Naive thymus-derived CD8-positive, alpha-beta T cell (primary cell): ENCODE measurements at regions of chr17 and their contacts with region 1.

Region 1: GRCh38 chr17:35578197-35578928 is at the start of gene PEX12:
- DNase-seq: peak; percentile 66 to 95 (median 88)
- ATAC-seq: peak; percentile 96 to 97
- H3K4me3 Mint-ChIP-seq: peak within 1 kb of the TSS; percentile 93 to 100 (median 98)
- H3K27ac Mint-ChIP-seq: peak within 1 kb of the TSS; percentile 98 to 100 (median 99)
- H3K4me1 Mint-ChIP-seq: peaks cover 10 to 30% (median 26%) of the 10 kb centered on the region in 4 donors
- H3K27me3 Mint-ChIP-seq: peaks cover 0 to under 1% (median 0%) of the 10 kb centered on the region in 5 donors
- polyA plus RNA-seq, gene PEX12: 1.7 to 2.5 (median 1.9) TPM

Region 2: DNA sequence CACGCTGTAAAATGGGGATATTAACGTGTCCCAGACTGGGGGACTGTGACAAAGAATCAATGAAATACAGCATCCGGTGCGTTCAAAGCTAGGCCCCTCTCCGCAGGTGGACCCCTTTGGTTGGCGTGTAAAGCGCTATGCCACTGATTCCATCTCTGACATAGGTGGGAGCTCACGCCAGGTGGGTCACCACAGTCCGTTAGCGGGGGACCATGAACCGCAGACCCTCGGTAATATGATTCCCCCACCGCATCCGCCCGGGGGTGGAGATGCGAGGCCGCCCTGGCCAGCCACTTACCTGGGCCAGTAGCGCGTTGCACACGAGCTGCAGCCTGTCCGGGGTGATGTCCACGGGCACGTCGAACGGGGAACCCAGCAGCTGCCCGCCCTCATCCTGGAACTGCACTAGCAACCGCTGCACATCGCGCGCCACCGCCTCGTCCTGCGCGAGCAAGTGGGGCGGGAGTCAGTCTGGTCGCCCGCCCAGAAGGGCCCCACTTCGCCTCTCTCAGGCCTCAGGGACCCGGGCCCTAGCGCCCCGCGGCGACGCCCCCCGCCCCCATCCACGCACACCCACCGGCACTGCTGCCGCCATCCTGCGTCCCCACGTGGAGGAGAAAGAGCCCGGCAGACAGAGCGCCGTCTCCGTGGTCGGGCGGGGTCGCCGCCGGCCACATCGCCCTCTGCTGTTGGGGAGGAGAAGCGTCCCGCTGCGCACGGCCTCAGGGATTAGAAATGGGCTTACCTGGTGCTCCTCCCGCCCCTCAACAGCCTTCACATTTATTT is 436.5 kb before region 1 on chr17 and contains the start of gene NLE1:
- POLR2A ChIA-PET with region 1: interaction called, 12 read pairs
- DNase-seq: peak; percentile 77 to 93 (median 88)
- ATAC-seq: peak; percentile 95 to 96
- H3K4me3 Mint-ChIP-seq: peak within 1 kb of the TSS; percentile 76 to 92 (median 84)
- H3K27ac Mint-ChIP-seq: peak within 1 kb of the TSS; percentile 51 to 94 (median 88)
- H3K4me1 Mint-ChIP-seq: peaks cover 5 to 26% (median 15%) of the 10 kb centered on the region in 4 donors
- H3K27me3 Mint-ChIP-seq: no peaks in the 10 kb centered on the region
- polyA plus RNA-seq, gene NLE1: 4.6 to 6.4 (median 5.3) TPM

Region 3: GRCh38 chr17:35161281-35161761 is 417.0 kb before region 1 on chr17:
- POLR2A ChIA-PET with region 1: interaction called, 11 read pairs
- DNase-seq: peak in 4 of 10 donors; percentile 28 to 58 (median 43)
- ATAC-seq: peak; percentile 50 to 64
- H3K4me3 Mint-ChIP-seq: peak overlapping the region; percentile 63 to 83 (median 76)
- H3K27ac Mint-ChIP-seq: peak overlapping the region; percentile 85 to 98 (median 94)
- H3K4me1 Mint-ChIP-seq: peaks cover 35 to 65% (median 54%) of the 10 kb centered on the region in 4 donors
- H3K27me3 Mint-ChIP-seq: no peaks in the 10 kb centered on the region

Region 4: GRCh38 chr17:35540589-35541404 is 37.6 kb before region 1 on chr17:
- POLR2A ChIA-PET with region 1: interaction called, 19 read pairs
- DNase-seq: peak in 3 of 10 donors; percentile 13 to 38 (median 33)
- ATAC-seq: peak; percentile 37
- H3K4me3 Mint-ChIP-seq: peak overlapping the region; percentile 70 to 98 (median 89)
- H3K27ac Mint-ChIP-seq: peak overlapping the region; percentile 80 to 100 (median 95)
- H3K4me1 Mint-ChIP-seq: peaks cover 18 to 62% (median 51%) of the 10 kb centered on the region in 4 donors
- H3K27me3 Mint-ChIP-seq: no peaks in the 10 kb centered on the region

Region 5: DNA sequence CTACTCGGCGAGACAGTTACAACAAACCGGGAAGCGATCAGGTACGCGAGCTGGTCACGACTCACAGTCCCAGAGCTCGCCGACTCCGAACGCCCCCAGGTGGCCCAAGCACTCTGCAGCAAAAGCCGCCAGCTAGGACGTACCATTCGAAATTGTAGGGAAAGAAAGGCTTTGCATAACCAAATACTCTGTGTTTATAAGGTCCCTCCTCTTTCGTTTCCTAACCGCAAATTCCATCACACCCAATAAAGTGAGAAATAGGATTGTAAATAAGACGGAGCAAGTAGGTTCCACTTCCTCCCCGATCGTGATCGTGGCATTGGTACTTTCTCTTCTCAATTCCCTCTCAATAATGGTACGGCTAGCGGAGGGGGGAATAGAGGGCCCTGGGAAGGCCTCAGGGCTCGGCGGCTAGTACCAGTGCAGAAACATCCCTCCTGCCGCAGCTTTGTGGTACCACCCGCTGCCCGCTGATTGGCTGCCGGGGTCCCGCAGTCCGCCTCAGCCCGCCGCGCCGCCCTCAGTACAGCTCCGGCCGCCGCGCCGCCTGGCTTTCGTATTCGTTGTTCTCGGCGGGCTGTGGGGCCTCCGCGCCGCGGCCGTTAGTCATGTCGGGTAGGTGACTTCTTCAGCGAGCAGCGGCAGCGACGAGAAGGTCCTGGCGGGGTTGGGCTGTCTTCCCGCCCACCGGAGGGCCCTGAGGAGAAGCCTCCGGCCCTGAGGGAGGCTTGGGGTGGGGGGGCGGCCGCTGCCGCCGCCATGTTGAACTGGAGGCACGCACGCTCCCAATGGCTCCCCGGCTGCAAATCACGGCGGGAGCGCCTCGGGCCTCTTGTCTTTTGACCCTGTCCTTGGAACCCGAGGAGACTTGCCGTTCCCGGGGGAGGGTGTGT is 230.8 kb after region 1 on chr17 and contains the start of gene TAF15:
- POLR2A ChIA-PET with region 1: interaction called, 18 read pairs
- DNase-seq: peak; percentile 92 to 98 (median 96)
- ATAC-seq: peak; percentile 90 to 92
- H3K4me3 Mint-ChIP-seq: peak within 1 kb of the TSS; percentile 92 to 99 (median 96)
- H3K27ac Mint-ChIP-seq: peak within 1 kb of the TSS; percentile 92 to 100 (median 98)
- H3K4me1 Mint-ChIP-seq: peaks cover 35 to 73% (median 62%) of the 10 kb centered on the region in 4 donors
- H3K27me3 Mint-ChIP-seq: no peaks in the 10 kb centered on the region
- polyA plus RNA-seq, gene TAF15: 15.0 to 20.2 (median 19.9) TPM